ENCODE measurements at regions of chr3 and their contacts with region 1.

Region 1: DNA sequence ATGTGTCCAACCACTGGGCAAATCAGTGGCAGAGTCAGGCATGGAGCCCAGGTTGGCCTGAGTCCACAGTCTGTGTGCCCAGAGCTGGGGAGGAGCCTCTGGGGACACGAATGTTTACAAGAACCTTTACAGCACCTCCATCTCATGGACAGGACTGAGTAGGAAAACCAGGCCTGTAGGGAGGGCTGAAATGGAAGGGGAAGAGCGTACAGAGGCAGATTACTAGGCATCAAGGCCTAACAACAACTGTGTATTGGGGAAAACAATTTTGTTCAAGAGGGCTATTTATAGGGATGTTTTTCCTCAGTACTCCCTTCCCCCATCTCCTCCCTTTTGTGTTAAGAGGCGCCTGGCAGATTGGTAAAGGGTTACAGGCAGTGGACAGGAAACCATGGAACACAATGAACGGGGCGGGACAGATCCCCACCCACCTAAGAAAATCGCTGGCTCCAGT is 15.1 kb upstream of the ARHGAP31 start:
- DNase-seq: no peak
- ATAC-seq: no peak
- H3K4me3 ChIP-seq: no peak overlapping the region
- H3K4me3 Mint-ChIP-seq: no peak overlapping the region
- H3K27ac ChIP-seq: no peak overlapping the region
- H3K27ac Mint-ChIP-seq: no peak overlapping the region
- H3K4me1 ChIP-seq: no peaks in the 10 kb centered on the region
- H3K4me1 Mint-ChIP-seq: peaks cover 20% of the 10 kb centered on the region
- H3K27me3 ChIP-seq: no peaks in the 10 kb centered on the region
- H3K27me3 Mint-ChIP-seq: no peaks in the 10 kb centered on the region
- CTCF ChIP-seq: no peak

Region 2: GRCh38 chr3:119258915-119259314 is 20.2 kb before region 1 on chr3:
- CTCF ChIA-PET with region 1: no interaction called
- POLR2A ChIA-PET with region 1: no interaction called
- intact Hi-C with region 1: no loop called
- DNase-seq: peak in 1 of 14 experiments; percentile 20
- ATAC-seq: no peak
- H3K4me3 ChIP-seq: no peak overlapping the region
- H3K4me3 Mint-ChIP-seq: no peak overlapping the region
- H3K27ac ChIP-seq: no peak overlapping the region
- H3K27ac Mint-ChIP-seq: no peak overlapping the region
- H3K4me1 ChIP-seq: no peaks in the 10 kb centered on the region
- H3K4me1 Mint-ChIP-seq: peaks cover 6% of the 10 kb centered on the region
- H3K27me3 ChIP-seq: no peaks in the 10 kb centered on the region
- H3K27me3 Mint-ChIP-seq: no peaks in the 10 kb centered on the region
- CTCF ChIP-seq: no peak

Region 3: DNA sequence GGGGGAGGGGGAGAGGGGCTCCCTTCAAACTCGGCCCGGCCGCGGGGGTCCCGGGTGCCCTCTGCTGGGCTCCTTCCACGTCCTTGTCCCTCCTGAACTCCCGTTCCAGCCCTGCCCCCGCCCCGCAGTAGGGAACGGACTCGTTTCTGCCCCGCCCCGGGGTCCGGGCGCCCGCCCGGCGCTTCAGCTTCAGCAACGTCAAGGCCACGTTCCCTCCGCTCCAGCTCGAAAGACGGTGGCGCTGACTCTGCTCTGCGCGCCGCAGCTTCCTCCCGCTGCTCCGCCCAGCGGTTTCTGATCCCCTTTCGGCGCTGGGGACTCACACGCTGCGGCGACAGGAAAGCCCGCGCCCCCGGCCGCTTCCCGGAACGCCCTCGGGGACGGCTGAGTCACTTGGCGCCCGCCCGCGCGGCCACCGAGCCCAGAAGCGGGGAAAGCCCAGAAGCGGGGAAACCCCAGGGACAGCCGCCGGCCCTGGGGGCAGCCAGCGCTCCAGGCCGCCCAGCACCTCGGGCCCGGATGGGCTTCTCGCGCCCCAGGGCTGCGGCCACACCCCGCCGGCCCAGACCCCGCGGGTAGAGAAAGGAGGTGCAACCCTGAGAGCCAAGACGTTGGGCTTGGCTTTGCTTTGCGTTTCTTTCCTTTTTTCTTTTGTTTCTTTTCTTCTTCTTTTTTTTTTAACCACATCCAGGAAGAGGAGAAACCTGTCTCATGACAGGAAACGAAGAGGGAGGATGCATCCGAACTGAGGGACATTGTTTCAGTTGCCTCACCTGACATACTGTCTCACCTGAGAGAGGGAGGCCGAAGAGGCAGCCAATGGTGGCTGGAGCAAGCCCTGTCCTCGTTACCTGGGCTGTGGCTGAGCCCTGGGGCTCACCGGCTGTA is 44.0 kb after region 1 on chr3:
- CTCF ChIA-PET with region 1: no interaction called
- POLR2A ChIA-PET with region 1: interaction called, 3 read pairs
- intact Hi-C with region 1: loop called (anchors 5 kb)
- DNase-seq: peak; percentile 70 to 97 (median 84)
- ATAC-seq: peak; percentile 86
- H3K4me3 ChIP-seq: peak overlapping the region; percentile 79
- H3K4me3 Mint-ChIP-seq: peak overlapping the region; percentile 89
- H3K27ac ChIP-seq: peak overlapping the region; percentile 81 to 90
- H3K27ac Mint-ChIP-seq: peak overlapping the region; percentile 96
- H3K4me1 ChIP-seq: peaks cover 23% of the 10 kb centered on the region
- H3K4me1 Mint-ChIP-seq: peaks cover 32% of the 10 kb centered on the region
- H3K27me3 ChIP-seq: no peaks in the 10 kb centered on the region
- H3K27me3 Mint-ChIP-seq: no peaks in the 10 kb centered on the region
- CTCF ChIP-seq: no peak

Region 4: DNA sequence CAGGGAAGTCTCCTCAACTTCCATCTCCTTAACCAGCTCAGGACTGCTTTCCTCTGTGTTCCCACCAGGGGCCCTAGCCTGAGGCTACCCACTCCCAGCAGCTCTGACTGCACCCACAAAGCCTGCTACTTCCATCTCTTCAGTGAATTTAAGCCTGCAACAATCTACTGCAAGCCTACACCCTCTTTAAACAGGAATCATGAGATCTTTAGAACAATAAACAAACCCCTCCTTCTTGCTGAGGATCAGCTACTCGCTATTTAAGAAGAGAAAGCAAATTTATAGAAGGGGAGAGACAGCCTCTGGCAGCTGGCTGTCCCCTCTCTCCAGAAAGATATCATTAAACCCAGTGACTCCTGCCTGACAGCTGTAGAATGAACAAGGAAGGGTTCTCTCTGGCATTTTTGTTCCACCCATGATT is 67.0 kb after region 1 on chr3:
- CTCF ChIA-PET with region 1: no interaction called
- POLR2A ChIA-PET with region 1: interaction called, 3 read pairs
- intact Hi-C with region 1: loop called in 1 of 2 experiments (anchors 2 kb)
- DNase-seq: no peak
- ATAC-seq: no peak
- H3K4me3 ChIP-seq: no peak overlapping the region
- H3K4me3 Mint-ChIP-seq: no peak overlapping the region
- H3K27ac ChIP-seq: no peak overlapping the region
- H3K27ac Mint-ChIP-seq: no peak overlapping the region
- H3K4me1 ChIP-seq: no peaks in the 10 kb centered on the region
- H3K4me1 Mint-ChIP-seq: peaks cover 21% of the 10 kb centered on the region
- H3K27me3 ChIP-seq: no peaks in the 10 kb centered on the region
- H3K27me3 Mint-ChIP-seq: no peaks in the 10 kb centered on the region
- CTCF ChIP-seq: no peak

Region 5: GRCh38 chr3:119457246-119457645 is 178.1 kb after region 1 on chr3:
- CTCF ChIA-PET with region 1: no interaction called
- POLR2A ChIA-PET with region 1: no interaction called
- intact Hi-C with region 1: loop called in 1 of 2 experiments (anchors 10 kb)
- DNase-seq: no peak
- ATAC-seq: no peak
- H3K4me3 ChIP-seq: no peak overlapping the region
- H3K4me3 Mint-ChIP-seq: no peak overlapping the region
- H3K27ac ChIP-seq: no peak overlapping the region
- H3K27ac Mint-ChIP-seq: no peak overlapping the region
- H3K4me1 ChIP-seq: peaks cover 4% of the 10 kb centered on the region
- H3K4me1 Mint-ChIP-seq: peaks cover 49% of the 10 kb centered on the region
- H3K27me3 ChIP-seq: no peaks in the 10 kb centered on the region
- H3K27me3 Mint-ChIP-seq: no peaks in the 10 kb centered on the region
- CTCF ChIP-seq: no peak

Region 6: GRCh38 chr3:119517112-119517511 is 238.0 kb after region 1 on chr3:
- CTCF ChIA-PET with region 1: no interaction called
- POLR2A ChIA-PET with region 1: no interaction called
- intact Hi-C with region 1: no loop called
- DNase-seq: no peak
- ATAC-seq: no peak
- H3K4me3 ChIP-seq: no peak overlapping the region
- H3K4me3 Mint-ChIP-seq: no peak overlapping the region
- H3K27ac ChIP-seq: no peak overlapping the region
- H3K27ac Mint-ChIP-seq: no peak overlapping the region
- H3K4me1 ChIP-seq: no peaks in the 10 kb centered on the region
- H3K4me1 Mint-ChIP-seq: no peaks in the 10 kb centered on the region
- H3K27me3 ChIP-seq: no peaks in the 10 kb centered on the region
- H3K27me3 Mint-ChIP-seq: no peaks in the 10 kb centered on the region
- CTCF ChIP-seq: no peak